ENCODE measurements at regions of chr2 and their contacts with region 1.

Region 1: GRCh38 chr2:126776692-126777619 is 121.0 kb downstream of the GYPC start:
- DNase-seq: peak; percentile 96

Region 2: DNA sequence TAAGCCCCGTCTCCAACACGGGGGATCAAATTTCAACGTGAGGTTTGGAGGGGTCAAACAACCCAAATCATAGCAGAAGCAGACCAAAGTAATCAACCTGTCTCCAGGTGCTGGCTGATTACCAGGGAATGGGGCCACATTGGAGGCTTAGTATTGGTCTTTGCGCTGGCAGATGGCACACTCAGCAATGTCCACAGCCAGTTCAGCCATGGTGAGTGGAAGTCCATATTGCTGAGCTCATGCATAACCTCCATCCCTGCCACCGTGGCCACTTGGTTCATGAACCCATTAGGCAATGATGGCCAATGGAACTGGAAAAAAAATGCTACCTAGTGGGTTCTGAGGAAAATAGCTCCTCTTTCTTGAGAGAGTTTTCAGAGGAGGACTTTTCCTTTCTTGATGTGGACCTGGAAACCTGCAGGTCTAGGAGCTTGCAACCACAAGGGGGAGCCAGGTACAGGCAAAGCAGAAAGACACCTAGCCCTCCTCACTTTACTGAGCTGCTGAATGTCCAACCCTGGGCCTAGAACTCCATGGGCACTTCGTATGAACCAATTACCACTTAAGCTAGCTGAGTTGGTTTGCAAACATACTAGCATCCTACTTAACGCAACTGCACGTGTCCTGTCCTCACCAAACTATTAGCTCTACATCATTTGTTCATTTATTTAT is 249.0 kb before region 1 on chr2:
- intact Hi-C with region 1: loop called (anchors 2 to 5 kb)
- DNase-seq: no peak

Region 3: DNA sequence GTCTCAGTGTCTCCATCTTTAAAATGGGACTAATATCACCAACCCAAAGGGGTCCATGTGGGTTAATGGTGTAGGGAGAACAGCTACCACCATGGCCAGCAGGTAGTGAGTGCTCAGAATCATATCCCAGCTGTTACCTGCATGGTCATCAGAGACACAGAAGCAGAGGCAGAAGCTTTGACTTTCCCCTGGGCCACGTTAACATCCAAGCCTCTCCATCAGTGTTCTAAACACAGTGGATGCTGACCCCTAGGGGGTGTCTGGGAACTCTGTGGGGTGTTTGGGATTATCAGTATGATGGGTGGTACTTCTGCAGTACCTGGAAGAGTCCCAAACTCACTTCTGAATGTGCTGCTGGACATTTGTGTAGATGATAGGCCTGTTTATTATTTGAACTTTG is 27.4 kb before region 1 on chr2:
- intact Hi-C with region 1: loop called in 1 of 2 experiments (anchors 1 kb)
- DNase-seq: no peak